ENCODE measurements at regions of chrX and their contacts with region 1.

Region 1: DNA sequence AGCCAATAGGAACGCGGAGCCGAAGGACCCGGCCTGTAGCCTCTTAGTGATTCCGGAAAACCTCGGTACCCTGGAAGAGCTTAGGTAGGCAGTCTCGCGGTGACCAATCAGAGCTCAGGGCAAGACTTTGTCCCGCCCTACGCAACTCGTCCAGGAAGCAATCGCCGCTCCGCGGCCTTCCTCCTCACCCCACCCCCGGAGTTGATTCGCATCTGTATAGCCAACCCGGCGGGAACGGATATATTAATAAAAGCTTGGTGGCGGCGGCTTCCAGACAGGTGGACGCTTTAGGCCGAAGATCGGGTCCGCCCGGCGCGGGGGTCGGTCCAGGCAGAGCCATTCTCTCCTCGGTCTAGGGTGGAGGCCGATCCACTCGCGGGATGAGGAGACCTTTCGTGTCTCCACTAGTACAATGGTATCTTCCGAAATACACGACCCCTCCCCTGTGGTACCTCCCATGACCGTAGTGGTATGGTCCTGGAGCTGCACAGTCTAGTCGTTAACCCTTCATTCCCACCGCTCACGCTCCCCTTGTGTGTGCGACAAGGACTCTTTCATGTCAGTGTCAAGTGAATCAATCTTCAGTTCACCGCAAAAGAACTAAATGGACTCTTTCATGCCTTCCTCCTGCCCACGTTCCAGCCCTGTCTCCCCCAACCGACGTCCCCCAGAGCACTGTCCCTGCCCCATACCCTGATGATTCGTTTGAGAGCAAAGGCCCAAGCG is 24.2 kb upstream of the GLOD5 start:
- DNase-seq: peak; percentile 74 to 95 (median 88)
- H3K4me3 ChIP-seq: peak overlapping the region; percentile 66
- H3K4me3 Mint-ChIP-seq: peak overlapping the region; percentile 90 to 96 (median 93)
- H3K27ac ChIP-seq: peak overlapping the region; percentile 86
- H3K27ac Mint-ChIP-seq: peak overlapping the region; percentile 94 to 99 (median 96)
- H3K4me1 ChIP-seq: peaks cover 17% of the 10 kb centered on the region
- H3K4me1 Mint-ChIP-seq: peaks cover 17 to 23% (median 18%) of the 10 kb centered on the region in 3 donors
- H3K27me3 ChIP-seq: no peaks in the 10 kb centered on the region
- H3K27me3 Mint-ChIP-seq: peaks cover 0 to 7% of the 10 kb centered on the region in 2 donors

Region 2: GRCh38 chrX:48487362-48487785 is 250.0 kb before region 1 on chrX:
- CTCF ChIA-PET with region 1: no interaction called
- POLR2A ChIA-PET with region 1: no interaction called
- DNase-seq: no peak
- H3K4me3 ChIP-seq: no peak overlapping the region
- H3K4me3 Mint-ChIP-seq: no peak overlapping the region
- H3K27ac ChIP-seq: no peak overlapping the region
- H3K27ac Mint-ChIP-seq: no peak overlapping the region
- H3K4me1 ChIP-seq: no peaks in the 10 kb centered on the region
- H3K4me1 Mint-ChIP-seq: no peaks in the 10 kb centered on the region
- H3K27me3 ChIP-seq: no peaks in the 10 kb centered on the region
- H3K27me3 Mint-ChIP-seq: no peaks in the 10 kb centered on the region

Region 3: GRCh38 chrX:48714573-48714972 is 22.8 kb before region 1 on chrX:
- CTCF ChIA-PET with region 1: interaction called, 4 read pairs
- POLR2A ChIA-PET with region 1: interaction called, 22 read pairs
- DNase-seq: peak in 2 of 5 donors; percentile 53 to 59
- H3K4me3 ChIP-seq: peak overlapping the region; percentile 46
- H3K4me3 Mint-ChIP-seq: peak overlapping the region; percentile 18 to 75 (median 52)
- H3K27ac ChIP-seq: peak overlapping the region; percentile 60
- H3K27ac Mint-ChIP-seq: peak overlapping the region; percentile 0 to 96 (median 92)
- H3K4me1 ChIP-seq: peaks cover 87% of the 10 kb centered on the region
- H3K4me1 Mint-ChIP-seq: peaks cover 77 to 87% (median 81%) of the 10 kb centered on the region in 3 donors
- H3K27me3 ChIP-seq: no peaks in the 10 kb centered on the region
- H3K27me3 Mint-ChIP-seq: peaks cover 0 to 10% of the 10 kb centered on the region in 2 donors

Region 4: DNA sequence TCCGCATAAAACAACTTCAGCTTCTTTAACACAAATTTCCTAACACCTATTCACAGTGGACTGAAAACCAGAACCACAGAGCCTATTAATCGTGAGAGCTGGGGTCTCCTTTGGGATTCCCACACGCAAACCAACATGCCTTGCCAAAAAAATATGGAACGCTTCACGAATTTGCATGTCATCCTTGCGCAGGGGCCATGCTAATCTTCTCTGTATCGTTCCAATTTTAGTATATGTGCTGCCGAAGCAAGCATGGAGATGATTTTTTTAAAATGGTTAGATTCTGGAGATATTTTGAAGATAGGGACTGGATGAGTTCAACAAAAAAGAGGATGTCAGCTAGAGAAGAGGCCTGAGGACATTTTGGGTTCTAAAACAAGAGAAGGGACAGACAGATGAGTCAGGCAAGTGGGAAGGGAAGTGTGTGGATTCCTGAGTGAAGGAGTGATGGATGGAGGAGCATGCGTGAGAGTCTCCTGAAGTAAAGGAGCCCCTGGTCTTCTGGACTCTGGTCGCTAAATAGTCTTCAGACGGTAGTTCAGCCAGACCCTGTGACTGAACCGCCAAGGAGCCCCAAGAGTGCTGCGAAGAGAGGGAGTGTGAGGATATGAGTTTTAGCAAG is 39.6 kb after region 1 on chrX:
- CTCF ChIA-PET with region 1: no interaction called
- POLR2A ChIA-PET with region 1: no interaction called
- DNase-seq: no peak
- H3K4me3 ChIP-seq: no peak overlapping the region
- H3K4me3 Mint-ChIP-seq: no peak overlapping the region
- H3K27ac ChIP-seq: peak overlapping the region; percentile 31
- H3K27ac Mint-ChIP-seq: peak overlapping the region in 1 of 8 donors; percentile 66
- H3K4me1 ChIP-seq: no peaks in the 10 kb centered on the region
- H3K4me1 Mint-ChIP-seq: no peaks in the 10 kb centered on the region
- H3K27me3 ChIP-seq: no peaks in the 10 kb centered on the region
- H3K27me3 Mint-ChIP-seq: peaks cover 4 to 14% of the 10 kb centered on the region in 2 donors

Region 5: GRCh38 chrX:48789366-48790220 is 52.2 kb after region 1 on chrX:
- CTCF ChIA-PET with region 1: no interaction called
- POLR2A ChIA-PET with region 1: no interaction called
- DNase-seq: no peak
- H3K4me3 ChIP-seq: no peak overlapping the region
- H3K4me3 Mint-ChIP-seq: peak overlapping the region in 1 of 7 donors; percentile 33
- H3K27ac ChIP-seq: peak overlapping the region; percentile 77
- H3K27ac Mint-ChIP-seq: peak overlapping the region in 3 of 8 donors; percentile 17 to 62 (median 33)
- H3K4me1 ChIP-seq: no peaks in the 10 kb centered on the region
- H3K4me1 Mint-ChIP-seq: peaks cover 7 to 13% (median 9%) of the 10 kb centered on the region in 3 donors
- H3K27me3 ChIP-seq: no peaks in the 10 kb centered on the region
- H3K27me3 Mint-ChIP-seq: peaks cover 0 to 6% of the 10 kb centered on the region in 2 donors